ENCODE measurements at regions of chr14 and their contacts with region 1.

Region 1: DNA sequence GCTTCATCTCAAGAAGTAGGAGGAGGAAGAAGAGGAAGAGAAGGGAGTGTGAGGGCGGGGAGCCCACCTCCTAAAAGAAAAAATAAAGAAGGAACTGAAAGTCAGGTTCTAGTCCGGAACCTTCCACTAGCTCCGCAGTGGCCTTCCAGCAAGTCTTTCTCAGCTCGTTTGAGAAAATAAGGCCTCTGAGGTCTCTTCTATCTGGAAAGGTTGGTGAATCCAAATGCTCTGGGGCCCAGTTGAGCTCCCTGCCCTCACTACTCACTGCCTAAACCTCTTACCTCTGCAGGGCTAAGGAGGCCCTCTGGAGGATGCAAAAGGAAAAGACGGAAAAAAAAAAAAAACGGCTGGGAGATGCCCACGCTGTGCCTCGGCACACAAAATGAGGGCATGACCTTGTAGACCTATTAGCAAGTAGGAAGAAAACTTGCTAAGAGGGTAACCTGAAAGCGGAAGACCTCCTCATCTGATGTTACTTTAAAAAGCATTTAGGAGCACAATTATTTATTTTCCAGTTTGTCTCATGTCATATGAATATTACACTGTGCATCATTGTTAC is 35.9 kb downstream of the FBLN5 start:
- DNase-seq: peak; percentile 78
- H3K4me3 Mint-ChIP-seq: no peak overlapping the region
- H3K27ac Mint-ChIP-seq: peak overlapping the region; percentile 39
- H3K4me1 Mint-ChIP-seq: no peaks in the 10 kb centered on the region
- H3K27me3 Mint-ChIP-seq: no peaks in the 10 kb centered on the region
- CTCF ChIP-seq: peak; percentile 64

Region 2: DNA sequence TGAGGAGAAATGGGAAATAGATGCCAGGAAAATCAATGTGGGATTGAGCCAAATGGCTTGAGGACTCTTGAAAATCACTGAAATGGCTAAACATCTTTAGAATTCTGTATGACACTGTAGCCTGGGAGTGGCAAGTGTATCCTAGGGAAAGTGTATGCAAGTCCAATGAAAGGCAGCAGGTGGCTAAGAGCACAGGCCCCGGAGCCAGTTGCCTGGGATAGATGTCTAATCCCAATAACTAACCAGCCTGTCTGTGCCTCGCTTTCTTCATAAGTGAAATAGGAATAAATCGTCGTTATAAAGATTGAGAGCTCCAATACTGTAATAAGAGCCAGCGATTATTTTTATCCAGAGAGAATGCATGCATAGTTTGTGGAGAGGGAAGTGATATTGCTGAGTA is 274.2 kb before region 1 on chr14:
- CTCF ChIA-PET with region 1: interaction called, 10 read pairs
- POLR2A ChIA-PET with region 1: no interaction called
- intact Hi-C with region 1: no loop called
- DNase-seq: no peak
- H3K4me3 Mint-ChIP-seq: no peak overlapping the region
- H3K27ac Mint-ChIP-seq: no peak overlapping the region
- H3K4me1 Mint-ChIP-seq: no peaks in the 10 kb centered on the region
- H3K27me3 Mint-ChIP-seq: no peaks in the 10 kb centered on the region
- CTCF ChIP-seq: no peak

Region 3: DNA sequence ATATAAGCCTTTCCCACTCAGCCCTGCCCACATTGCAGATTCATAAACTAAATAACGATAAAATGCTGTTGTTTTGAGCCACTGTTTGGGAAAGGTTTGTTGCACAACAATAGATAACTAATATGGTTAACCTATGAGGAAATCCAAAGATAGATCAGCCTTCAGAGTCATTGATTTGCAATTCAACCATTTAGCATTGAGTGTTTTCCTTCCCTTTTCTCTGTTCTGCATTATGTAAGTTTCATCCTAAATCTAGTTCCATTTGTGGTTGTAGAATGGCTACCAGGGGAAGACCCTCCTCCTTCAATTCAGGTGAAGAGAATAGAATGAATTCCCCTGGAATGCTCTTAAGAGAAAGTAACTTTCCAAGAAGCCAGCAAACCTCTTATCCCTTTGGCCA is 63.9 kb before region 1 on chr14:
- CTCF ChIA-PET with region 1: no interaction called
- POLR2A ChIA-PET with region 1: no interaction called
- intact Hi-C with region 1: no loop called
- DNase-seq: no peak
- H3K4me3 Mint-ChIP-seq: no peak overlapping the region
- H3K27ac Mint-ChIP-seq: no peak overlapping the region
- H3K4me1 Mint-ChIP-seq: no peaks in the 10 kb centered on the region
- H3K27me3 Mint-ChIP-seq: peaks cover 12% of the 10 kb centered on the region
- CTCF ChIP-seq: no peak